Heart left ventricle (tissue), 16 donors: ENCODE measurements at regions of chr19 and their contacts with region 1.

Region 1: DNA sequence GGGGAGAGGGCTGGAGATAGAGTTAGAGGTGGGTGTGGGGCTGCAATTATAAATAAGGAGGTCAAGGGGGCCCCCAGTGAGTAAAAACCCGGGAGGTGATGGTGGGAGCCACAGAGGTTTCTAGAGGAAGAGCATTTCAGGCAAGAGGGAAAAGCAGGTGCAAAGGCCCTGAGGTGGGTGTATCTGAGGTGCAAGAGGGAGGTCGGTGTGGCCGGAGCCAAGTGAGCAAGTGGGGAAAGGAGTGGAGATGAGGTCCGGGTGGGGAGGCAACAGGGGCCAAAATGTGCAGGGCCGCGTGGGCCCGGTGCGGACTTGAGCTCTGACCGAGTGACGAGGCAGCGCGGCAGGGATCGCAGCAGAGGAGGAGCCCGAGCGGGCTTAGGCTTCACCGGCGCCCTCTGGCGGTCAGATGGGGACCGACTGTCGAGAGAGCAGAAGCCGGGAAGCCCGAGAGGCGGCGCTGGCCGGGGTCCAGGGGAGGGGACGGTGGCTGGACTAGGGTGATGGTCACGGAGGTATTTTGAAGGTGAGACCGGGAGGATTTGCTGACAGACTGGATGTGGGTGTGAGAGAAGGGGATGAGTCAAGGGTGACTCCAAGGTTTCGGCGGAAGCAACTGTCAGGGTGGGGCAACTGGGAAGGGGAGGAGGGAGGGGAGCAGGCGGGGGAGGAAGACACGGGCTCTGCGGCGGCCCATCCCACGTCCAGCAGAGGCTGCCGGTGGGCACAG is 17.7 kb upstream of the SPACA4 start:
- DNase-seq: peak; percentile 87 to 96 (median 91)
- ATAC-seq: peak; percentile 64 to 90 (median 86)
- H3K4me3 ChIP-seq: peak overlapping the region in 11 of 12 donors; percentile 17 to 53 (median 42)
- H3K27ac ChIP-seq: peak overlapping the region in 3 of 12 donors; percentile 13 to 35 (median 17)
- H3K4me1 ChIP-seq: peaks cover 0 to 19% (median 4%) of the 10 kb centered on the region in 12 donors
- H3K27me3 ChIP-seq: no peaks in the 10 kb centered on the region
- CTCF ChIP-seq: peak; percentile 86 to 97 (median 92)
- POLR2A ChIP-seq: peak in 1 of 2 donors; percentile 20

Region 2: GRCh38 chr19:47225746-47226425 is 1362.9 kb before region 1 on chr19:
- intact Hi-C with region 1: no loop called
- DNase-seq: peak; percentile 89 to 94 (median 92)
- ATAC-seq: peak; percentile 19 to 78 (median 68)
- H3K4me3 ChIP-seq: peak overlapping the region; percentile 38 to 99 (median 88)
- H3K27ac ChIP-seq: peak overlapping the region; percentile 97 to 100 (median 100)
- H3K4me1 ChIP-seq: peaks cover 0 to 53% (median 31%) of the 10 kb centered on the region in 12 donors
- H3K27me3 ChIP-seq: no peaks in the 10 kb centered on the region
- CTCF ChIP-seq: peak in 9 of 12 donors; percentile 33 to 68 (median 54)
- POLR2A ChIP-seq: peak; percentile 99 to 100

Region 3: GRCh38 chr19:48255376-48256303 is 333.2 kb before region 1 on chr19 and contains the start of gene CARD8:
- intact Hi-C with region 1: loop called in 2 of 10 experiments (anchors 2 to 10 kb)
- DNase-seq: peak; percentile 85 to 91 (median 85)
- ATAC-seq: peak; percentile 94 to 97 (median 96)
- H3K4me3 ChIP-seq: peak within 1 kb of the TSS; percentile 22 to 90 (median 68)
- H3K27ac ChIP-seq: peak within 1 kb of the TSS; percentile 81 to 99 (median 94)
- H3K4me1 ChIP-seq: peaks cover 0 to 71% (median 23%) of the 10 kb centered on the region in 12 donors
- H3K27me3 ChIP-seq: no peaks in the 10 kb centered on the region
- CTCF ChIP-seq: peak in 2 of 12 donors; percentile 11 to 27
- POLR2A ChIP-seq: peak in 1 of 2 donors; percentile 52
- total RNA-seq, gene CARD8: 18.3 to 49.0 (median 28.8) TPM

Region 4: DNA sequence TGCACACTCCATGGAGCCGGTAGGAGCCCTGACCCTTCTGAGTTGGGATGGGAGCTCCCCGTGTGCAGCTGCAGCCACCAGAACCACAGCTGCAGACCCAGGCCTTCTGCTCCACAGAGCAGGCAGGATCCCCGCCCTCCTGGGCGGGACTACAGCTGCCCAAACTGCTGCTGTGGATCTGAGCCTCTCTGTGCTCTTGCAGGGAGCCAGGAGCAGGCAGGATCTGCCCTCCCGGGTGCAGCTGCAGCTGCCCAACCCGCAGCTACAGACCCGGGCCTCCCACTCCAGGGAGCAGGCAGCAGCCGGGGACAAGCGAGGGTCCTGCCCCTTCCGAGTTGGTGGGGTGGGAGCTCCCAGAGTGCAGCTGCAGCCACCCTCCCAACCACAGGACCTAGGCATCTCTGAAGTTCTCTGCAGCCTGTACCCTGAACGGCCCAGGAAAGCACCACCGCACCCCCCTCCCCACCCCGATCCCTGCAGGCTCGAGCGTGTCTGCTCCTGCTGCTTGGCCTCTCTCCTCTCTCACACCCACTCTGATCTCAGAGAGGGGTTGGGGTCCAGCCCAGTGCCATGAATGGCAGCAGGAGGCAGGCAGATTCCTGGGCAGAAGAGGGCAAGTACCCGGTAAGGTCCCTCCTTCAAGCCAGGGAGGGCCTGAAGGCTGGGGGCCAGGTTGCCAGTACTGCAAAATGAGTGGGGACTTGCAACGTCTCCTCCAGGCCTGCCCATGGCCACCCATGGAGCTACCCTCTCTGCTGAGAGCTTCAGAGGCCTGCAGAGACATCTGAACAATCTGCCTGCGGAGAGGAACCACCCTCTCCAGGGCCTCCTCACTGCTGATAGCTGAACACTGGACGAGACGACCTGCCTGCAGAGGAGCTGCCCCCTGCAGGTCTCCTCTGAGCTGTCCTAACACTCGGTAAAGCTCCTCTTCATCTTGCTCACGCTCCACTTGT is 279.9 kb before region 1 on chr19:
- intact Hi-C with region 1: loop called in 4 of 10 experiments (anchors 10 kb)
- DNase-seq: no peak
- ATAC-seq: peak in 3 of 4 donors; percentile 23 to 55 (median 31)
- H3K4me3 ChIP-seq: no peak overlapping the region
- H3K27ac ChIP-seq: peak overlapping the region in 7 of 12 donors; percentile 55 to 71 (median 67)
- H3K4me1 ChIP-seq: peaks cover 0 to 26% (median 15%) of the 10 kb centered on the region in 12 donors
- H3K27me3 ChIP-seq: no peaks in the 10 kb centered on the region
- CTCF ChIP-seq: peak in 6 of 12 donors; percentile 10 to 26 (median 15)
- POLR2A ChIP-seq: no peak

Region 5: GRCh38 chr19:48391107-48391986 is 197.5 kb before region 1 on chr19 and contains the start of gene KDELR1:
- intact Hi-C with region 1: loop called in 2 of 10 experiments (anchors 5 to 10 kb)
- DNase-seq: peak; percentile 78 to 92 (median 80)
- ATAC-seq: peak; percentile 89 to 96 (median 93)
- H3K4me3 ChIP-seq: peak within 1 kb of the TSS; percentile 77 to 99 (median 90)
- H3K27ac ChIP-seq: peak within 1 kb of the TSS; percentile 67 to 97 (median 87)
- H3K4me1 ChIP-seq: peaks cover 0 to 28% (median 11%) of the 10 kb centered on the region in 12 donors
- H3K27me3 ChIP-seq: peaks cover 15 to 43% (median 35%) of the 10 kb centered on the region in 9 donors
- CTCF ChIP-seq: peak; percentile 85 to 97 (median 91)
- POLR2A ChIP-seq: peak in 1 of 2 donors; percentile 61
- total RNA-seq, gene KDELR1: 64.5 to 109 (median 79.1) TPM

Region 6: DNA sequence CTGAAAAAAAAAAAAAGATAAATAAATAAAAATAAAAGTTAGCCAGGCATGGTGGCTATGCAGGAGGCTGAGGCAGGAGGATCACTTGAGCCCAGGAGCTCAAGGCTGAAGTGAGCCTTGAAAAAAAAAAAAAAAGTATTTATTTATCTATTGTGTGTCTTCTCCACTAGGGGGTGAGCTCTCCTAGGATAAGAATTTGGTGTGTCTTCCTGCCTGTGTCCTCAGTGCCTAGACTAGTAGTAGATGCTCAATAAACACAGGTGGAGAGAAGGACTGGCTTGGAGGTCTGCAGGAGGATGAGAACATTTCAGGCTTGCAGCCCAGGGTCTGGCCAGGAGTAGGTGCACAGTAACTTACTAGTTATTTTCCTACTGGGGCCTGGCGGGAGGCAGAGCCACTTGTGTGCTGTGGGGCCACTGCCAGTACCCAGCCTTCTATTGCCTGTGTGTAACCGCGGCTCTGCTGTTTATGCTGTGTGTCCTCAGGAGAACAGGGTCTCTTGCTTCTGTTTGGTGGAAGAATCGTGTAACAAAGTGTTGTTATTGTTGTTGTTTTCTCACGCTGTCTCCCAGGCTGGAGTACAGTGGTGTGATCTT is 82.6 kb before region 1 on chr19:
- intact Hi-C with region 1: loop called in 8 of 10 experiments (anchors 5 kb)
- DNase-seq: no peak
- ATAC-seq: peak in 1 of 4 donors; percentile 17
- H3K4me3 ChIP-seq: no peak overlapping the region
- H3K27ac ChIP-seq: no peak overlapping the region
- H3K4me1 ChIP-seq: peaks cover 0 to 14% (median 3%) of the 10 kb centered on the region in 12 donors
- H3K27me3 ChIP-seq: peaks cover 4 to 34% (median 15%) of the 10 kb centered on the region in 9 donors
- CTCF ChIP-seq: peak; percentile 9 to 47 (median 33)
- POLR2A ChIP-seq: no peak

Region 7: DNA sequence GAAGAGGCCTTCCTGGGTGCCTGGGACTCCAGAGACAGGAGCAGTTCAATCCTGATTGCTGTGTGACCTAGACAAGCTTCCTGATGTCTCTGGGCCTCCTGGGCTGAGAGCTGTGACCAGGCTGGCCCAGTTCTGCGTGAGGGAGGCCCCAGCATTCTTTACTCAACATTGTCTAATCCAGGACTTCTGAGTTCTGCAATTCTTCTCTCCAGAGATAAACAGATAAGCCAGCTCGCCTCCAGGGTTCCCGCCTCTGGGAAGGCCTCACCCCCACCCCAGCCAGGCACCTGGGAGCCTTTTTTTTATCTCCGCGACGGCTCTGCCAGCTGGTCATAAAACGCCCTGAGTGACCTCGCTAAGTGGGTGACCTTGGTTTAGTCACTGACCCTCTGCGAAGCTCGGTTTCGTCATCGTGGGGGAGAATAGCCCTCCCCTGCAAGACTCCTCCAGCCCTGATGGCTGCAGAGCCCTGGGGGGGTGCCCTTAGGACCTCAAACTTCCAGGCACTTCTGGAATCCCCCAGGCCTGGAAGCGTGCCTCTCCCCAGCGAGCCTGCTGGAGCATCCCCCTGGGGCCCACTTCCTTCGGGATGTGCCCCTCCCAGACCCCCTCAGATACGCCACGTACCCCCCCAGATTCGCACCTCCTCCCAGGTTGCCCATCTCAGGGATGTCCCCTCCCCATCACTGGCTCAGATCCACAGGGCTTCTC is 35.0 kb before region 1 on chr19:
- intact Hi-C with region 1: no loop called
- DNase-seq: peak in 1 of 5 donors; percentile 33
- ATAC-seq: peak in 2 of 4 donors; percentile 20 to 58
- H3K4me3 ChIP-seq: no peak overlapping the region
- H3K27ac ChIP-seq: no peak overlapping the region
- H3K4me1 ChIP-seq: peaks cover 0 to 7% (median 0%) of the 10 kb centered on the region in 12 donors
- H3K27me3 ChIP-seq: peaks cover 0 to 26% (median 4%) of the 10 kb centered on the region in 9 donors
- CTCF ChIP-seq: no peak
- POLR2A ChIP-seq: no peak